ENCODE measurements at regions of chr6 and their contacts with region 1.

Region 1: DNA sequence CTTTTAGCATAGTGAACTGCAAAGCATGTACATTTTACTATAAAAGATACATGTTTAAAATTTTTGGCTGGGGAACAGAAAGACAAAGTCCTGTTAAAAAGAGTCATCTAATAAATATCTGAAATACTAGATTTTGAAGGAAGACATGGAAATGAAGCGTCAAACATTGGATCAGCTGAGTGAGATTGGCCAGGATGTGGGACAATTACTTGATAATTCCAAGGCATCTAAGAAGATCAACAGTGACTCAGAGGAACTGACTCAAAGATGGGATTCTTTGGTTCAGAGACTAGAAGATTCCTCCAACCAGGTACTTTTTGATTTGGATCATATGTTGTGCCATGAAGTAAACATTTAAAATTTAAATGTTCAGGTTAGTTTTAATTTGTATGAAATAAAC is 162.3 kb downstream of the UTRN start:
- DNase-seq: no peak
- H3K4me3 ChIP-seq: no peak overlapping the region
- H3K27ac ChIP-seq: no peak overlapping the region
- H3K4me1 ChIP-seq: no peaks in the 10 kb centered on the region
- H3K27me3 ChIP-seq: no peaks in the 10 kb centered on the region
- CTCF ChIP-seq: no peak
- POLR2A ChIP-seq: no peak

Region 2: DNA sequence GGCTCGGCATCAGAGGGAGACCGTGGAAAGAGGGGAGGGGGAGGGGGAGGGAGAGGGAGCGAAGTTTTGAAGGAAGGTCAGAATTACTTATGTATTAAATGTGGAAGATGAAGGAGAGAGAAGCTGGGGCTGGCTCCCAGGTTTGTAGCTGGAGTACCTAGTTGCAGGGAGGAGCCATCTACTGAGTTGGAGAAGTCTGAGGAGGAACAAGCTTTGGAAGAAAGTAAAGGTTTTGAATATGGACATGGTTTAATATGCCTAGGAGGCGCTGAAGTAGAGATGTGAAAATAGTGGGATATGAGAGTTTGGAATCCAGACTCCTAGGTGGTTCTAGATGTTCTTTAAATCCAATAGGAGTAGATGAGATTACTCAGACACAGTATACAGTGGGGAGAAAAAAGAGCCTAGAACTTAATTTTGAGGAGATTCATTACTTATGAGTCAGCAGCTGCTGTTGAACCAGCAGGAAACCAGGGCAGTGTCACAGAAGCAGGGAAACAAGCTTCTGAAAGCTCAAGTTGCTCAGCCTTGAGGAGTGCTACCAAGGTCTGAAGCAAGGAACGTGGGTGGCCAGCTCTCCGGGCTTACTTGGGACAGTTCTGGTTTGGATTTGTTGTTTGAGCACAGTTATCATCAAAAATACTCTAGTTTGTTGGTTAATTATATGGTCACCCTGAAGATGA is 13.0 kb before region 1 on chr6:
- intact Hi-C with region 1: loop called (anchors 1 kb)
- DNase-seq: no peak
- H3K4me3 ChIP-seq: no peak overlapping the region
- H3K27ac ChIP-seq: no peak overlapping the region
- H3K4me1 ChIP-seq: no peaks in the 10 kb centered on the region
- H3K27me3 ChIP-seq: no peaks in the 10 kb centered on the region
- CTCF ChIP-seq: no peak
- POLR2A ChIP-seq: no peak